WTC11 (cell line): ENCODE measurements at regions of chr1 and their contacts with region 1.

Region 1: DNA sequence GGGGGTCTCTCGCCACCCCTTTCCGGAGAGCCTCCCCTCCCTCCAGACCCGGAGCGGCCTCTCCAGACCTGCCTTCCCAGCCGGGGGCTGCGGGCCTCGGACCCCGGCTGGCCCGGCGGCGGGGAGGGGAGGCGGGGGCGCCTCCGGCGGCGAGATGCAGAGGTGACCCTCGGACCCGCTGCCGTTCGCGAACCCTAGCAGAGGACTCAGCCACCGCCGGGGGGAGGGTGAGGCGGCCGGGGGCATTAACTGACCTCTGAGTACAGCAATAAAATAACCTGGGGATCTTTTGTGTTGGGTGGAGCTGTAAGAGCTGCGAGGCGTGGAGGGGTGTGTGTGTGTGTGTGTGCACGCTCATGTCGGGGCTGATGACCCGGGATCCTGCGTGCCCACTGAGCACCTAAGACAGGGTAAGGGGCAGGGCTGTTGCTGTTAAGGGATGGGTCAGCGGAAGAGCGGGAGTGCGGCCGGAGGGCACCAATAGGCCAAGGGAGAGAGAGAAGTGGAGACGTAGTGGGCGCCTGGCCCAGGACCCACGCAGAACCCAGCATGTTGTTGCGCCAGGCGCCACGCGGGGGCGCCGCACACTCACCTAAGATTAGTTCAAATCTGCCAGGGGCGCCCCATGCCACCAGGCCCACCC is 6.3 kb downstream of the HAPLN2 start:
- DNase-seq: peak; percentile 66
- ATAC-seq: peak; percentile 40
- H3K4me3 Mint-ChIP-seq: peak overlapping the region; percentile 79
- H3K27ac Mint-ChIP-seq: no peak overlapping the region
- H3K4me1 Mint-ChIP-seq: peaks cover 6% of the 10 kb centered on the region
- H3K27me3 Mint-ChIP-seq: peaks cover 83% of the 10 kb centered on the region
- CTCF ChIP-seq: peak; percentile 94

Region 2: DNA sequence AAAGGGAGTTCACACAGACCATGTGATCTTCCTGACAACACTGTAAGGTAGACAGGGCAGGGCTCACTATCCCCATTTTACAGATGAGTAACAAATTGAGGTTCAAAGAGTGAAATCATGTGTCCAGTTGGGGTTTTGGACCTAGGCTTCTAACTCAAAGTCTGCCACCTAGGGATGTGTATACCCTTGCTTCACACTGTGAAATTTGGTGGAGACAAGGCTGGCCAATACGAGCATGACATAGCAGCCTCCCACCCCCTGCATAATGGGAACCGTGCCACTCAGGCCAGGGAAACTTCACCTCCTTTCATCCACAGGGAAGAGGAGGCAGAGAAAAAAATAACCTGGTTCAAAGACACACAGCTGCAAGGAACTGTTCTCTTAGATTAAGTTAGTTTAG is 60.0 kb before region 1 on chr1:
- CTCF ChIA-PET with region 1: no interaction called
- POLR2A ChIA-PET with region 1: no interaction called
- DNase-seq: no peak
- ATAC-seq: no peak
- H3K4me3 Mint-ChIP-seq: no peak overlapping the region
- H3K27ac Mint-ChIP-seq: no peak overlapping the region
- H3K4me1 Mint-ChIP-seq: no peaks in the 10 kb centered on the region
- H3K27me3 Mint-ChIP-seq: no peaks in the 10 kb centered on the region
- CTCF ChIP-seq: no peak

Region 3: DNA sequence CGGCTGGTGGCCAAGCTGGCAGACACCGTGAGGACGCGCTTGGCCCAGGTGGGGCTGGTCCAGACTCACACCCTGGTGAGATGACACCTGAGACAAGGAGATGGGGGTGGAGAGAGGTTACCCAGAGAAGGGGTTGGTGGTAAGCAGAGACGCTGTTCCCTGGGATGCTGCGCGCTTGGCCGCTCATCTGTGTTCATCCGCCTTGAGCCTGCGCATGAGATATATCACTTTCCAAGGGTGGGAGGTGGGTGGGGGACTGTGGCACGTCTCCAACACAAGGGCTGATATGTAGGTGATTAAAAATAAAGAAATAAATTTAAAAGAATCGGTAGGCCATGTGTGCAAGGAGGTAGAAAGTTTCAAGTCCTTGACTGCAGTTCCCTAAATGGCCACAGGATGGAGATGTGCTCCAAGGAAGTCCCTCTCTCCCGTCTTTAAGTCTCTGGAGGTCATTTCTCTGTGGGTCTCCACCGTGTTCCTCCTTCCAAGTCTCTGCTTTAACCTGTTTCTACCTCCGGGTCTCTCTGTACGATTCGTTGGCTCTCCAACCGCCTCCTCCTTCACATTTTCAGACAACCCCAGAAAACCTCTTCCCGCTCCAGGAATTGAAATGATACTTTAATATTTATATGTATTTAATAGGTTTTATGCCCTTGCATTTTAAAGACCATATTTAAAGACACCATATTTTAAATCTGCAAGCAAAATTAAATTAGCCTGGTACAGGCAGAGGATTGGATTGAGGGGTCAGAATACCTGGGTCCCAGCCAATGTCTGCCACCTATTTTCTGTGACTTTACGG is 41.5 kb before region 1 on chr1:
- CTCF ChIA-PET with region 1: interaction called, 10 read pairs
- POLR2A ChIA-PET with region 1: no interaction called
- DNase-seq: peak; percentile 85
- ATAC-seq: peak; percentile 65
- H3K4me3 Mint-ChIP-seq: peak overlapping the region; percentile 52
- H3K27ac Mint-ChIP-seq: no peak overlapping the region
- H3K4me1 Mint-ChIP-seq: peaks cover 20% of the 10 kb centered on the region
- H3K27me3 Mint-ChIP-seq: peaks cover 2% of the 10 kb centered on the region
- CTCF ChIP-seq: peak; percentile 87

Region 4: GRCh38 chr1:156608036-156608674 is 17.4 kb before region 1 on chr1:
- CTCF ChIA-PET with region 1: interaction called, 30 read pairs
- POLR2A ChIA-PET with region 1: interaction called, 5 read pairs
- DNase-seq: peak; percentile 53
- ATAC-seq: peak; percentile 97
- H3K4me3 Mint-ChIP-seq: no peak overlapping the region
- H3K27ac Mint-ChIP-seq: no peak overlapping the region
- H3K4me1 Mint-ChIP-seq: peaks cover 4% of the 10 kb centered on the region; the same call in 1 of the 2 replicates
- H3K27me3 Mint-ChIP-seq: peaks cover 5% of the 10 kb centered on the region; the same call in 1 of the 2 replicates
- CTCF ChIP-seq: no peak; the same call in 1 of the 2 replicates

Region 5: GRCh38 chr1:156652131-156652991 is 26.8 kb after region 1 on chr1:
- CTCF ChIA-PET with region 1: interaction called, 365 read pairs
- POLR2A ChIA-PET with region 1: interaction called, 7 read pairs
- DNase-seq: peak; percentile 84
- ATAC-seq: peak; percentile 58
- H3K4me3 Mint-ChIP-seq: no peak overlapping the region
- H3K27ac Mint-ChIP-seq: no peak overlapping the region
- H3K4me1 Mint-ChIP-seq: peaks cover 28% of the 10 kb centered on the region
- H3K27me3 Mint-ChIP-seq: peaks cover 95% of the 10 kb centered on the region
- CTCF ChIP-seq: no peak

Region 6: DNA sequence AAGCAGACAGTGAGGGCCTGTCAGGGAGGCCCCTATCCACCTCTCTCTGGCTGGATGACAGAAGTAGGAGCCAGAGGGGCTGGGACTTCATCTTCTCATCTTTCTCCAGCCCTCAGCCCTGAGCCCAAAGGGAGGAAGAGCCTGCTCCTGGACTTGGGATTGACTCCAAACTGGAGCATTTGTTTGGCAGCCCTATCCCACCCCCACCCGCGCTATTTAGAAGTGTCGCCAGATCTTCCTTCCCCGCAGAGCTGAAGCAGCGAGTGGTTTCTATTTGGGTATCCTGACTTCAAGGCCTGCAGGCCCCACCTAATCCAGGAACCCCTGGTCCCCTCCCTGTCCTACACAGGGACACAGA is 42.0 kb after region 1 on chr1:
- CTCF ChIA-PET with region 1: interaction called, 365 read pairs
- POLR2A ChIA-PET with region 1: no interaction called
- DNase-seq: no peak
- ATAC-seq: no peak
- H3K4me3 Mint-ChIP-seq: no peak overlapping the region
- H3K27ac Mint-ChIP-seq: peak overlapping the region; percentile 76
- H3K4me1 Mint-ChIP-seq: peaks cover 88% of the 10 kb centered on the region
- H3K27me3 Mint-ChIP-seq: peaks cover 4% of the 10 kb centered on the region; the same call in 1 of the 2 replicates
- CTCF ChIP-seq: no peak

Region 7: DNA sequence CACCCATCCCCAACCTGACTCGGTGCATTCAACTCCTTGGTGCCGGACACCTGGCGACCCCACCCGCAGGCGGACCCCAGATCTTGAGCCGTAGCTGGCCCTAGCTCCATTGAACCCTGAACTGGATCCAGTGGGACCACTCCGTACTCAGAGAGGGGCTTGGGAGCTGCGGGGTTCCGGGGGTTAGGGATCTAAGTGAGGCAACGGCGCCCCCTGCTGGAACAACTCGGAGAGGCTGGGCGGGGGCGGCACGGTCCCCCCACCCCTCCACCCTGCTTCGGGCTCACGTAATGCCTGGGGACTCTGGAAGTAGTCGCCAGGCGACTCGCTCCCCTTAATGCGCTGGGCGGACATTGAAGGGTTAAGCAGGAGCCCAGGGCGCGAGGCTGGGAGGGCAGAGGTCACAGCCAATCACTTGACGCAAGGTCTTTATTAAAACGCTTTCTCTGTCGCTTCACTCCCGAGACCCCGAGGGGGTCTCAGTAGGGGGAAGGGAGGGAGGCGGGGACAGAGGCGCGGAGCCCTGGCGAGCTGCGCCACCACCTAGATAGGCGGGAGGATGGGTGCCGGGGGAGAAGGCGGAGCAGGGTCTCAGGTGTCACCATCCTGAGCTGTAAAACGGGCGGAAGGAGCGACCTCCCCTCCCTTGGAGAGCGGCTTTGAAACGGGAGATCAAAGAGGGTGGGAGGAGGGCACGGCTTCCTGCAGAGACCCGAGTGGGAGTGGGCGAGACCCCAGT is 80.5 kb after region 1 on chr1:
- CTCF ChIA-PET with region 1: interaction called, 22 read pairs
- POLR2A ChIA-PET with region 1: interaction called, 7 read pairs
- DNase-seq: peak; percentile 94
- ATAC-seq: peak; percentile 45
- H3K4me3 Mint-ChIP-seq: peak overlapping the region; percentile 84
- H3K27ac Mint-ChIP-seq: peak overlapping the region; percentile 96
- H3K4me1 Mint-ChIP-seq: peaks cover 62% of the 10 kb centered on the region
- H3K27me3 Mint-ChIP-seq: peaks cover 23% of the 10 kb centered on the region
- CTCF ChIP-seq: peak; percentile 96